Endothelial cell of umbilical vein (primary cell): ENCODE measurements at regions of chr2 and their contacts with region 1.

Region 1: GRCh38 chr2:227406177-227407031 is 18.7 kb upstream of the SCYGR1 start:
- DNase-seq: peak; percentile 96
- H3K4me3 ChIP-seq: no peak overlapping the region
- H3K27ac ChIP-seq: peak overlapping the region; percentile 85
- H3K4me1 ChIP-seq: peaks cover 8% of the 10 kb centered on the region
- H3K27me3 ChIP-seq: no peaks in the 10 kb centered on the region
- CTCF ChIP-seq: peak; percentile 57 to 81
- POLR2A ChIP-seq: peak; percentile 50

Region 2: GRCh38 chr2:226118471-226119430 is 1287.7 kb before region 1 on chr2:
- CTCF ChIA-PET with region 1: no interaction called
- POLR2A ChIA-PET with region 1: no interaction called
- dilution Hi-C with region 1: no loop called
- intact Hi-C with region 1: no loop called
- DNase-seq: no peak
- H3K4me3 ChIP-seq: no peak overlapping the region
- H3K27ac ChIP-seq: no peak overlapping the region
- H3K4me1 ChIP-seq: peaks cover 5% of the 10 kb centered on the region
- H3K27me3 ChIP-seq: no peaks in the 10 kb centered on the region
- CTCF ChIP-seq: no peak
- POLR2A ChIP-seq: no peak

Region 3: DNA sequence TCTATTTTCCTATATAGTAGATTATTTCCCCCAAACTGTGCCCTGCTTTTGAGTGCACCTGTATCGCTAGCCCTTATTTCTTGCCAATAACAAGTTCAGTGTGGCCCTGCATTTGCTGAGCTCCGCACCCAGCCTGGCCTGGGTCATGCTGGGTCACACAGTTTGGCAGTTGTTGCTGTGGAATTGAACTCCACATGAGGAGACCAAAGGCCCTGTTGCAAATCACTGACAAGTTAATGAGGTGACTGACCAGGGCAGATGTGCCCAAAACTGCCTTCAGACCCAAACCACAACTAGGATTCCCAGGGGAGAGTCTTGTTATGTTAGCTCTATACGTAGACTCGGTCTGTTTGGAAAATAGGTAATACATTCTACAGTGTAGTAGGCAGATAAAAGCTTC is 273.4 kb before region 1 on chr2:
- CTCF ChIA-PET with region 1: interaction called, 3 read pairs
- POLR2A ChIA-PET with region 1: no interaction called
- dilution Hi-C with region 1: no loop called
- intact Hi-C with region 1: loop called (anchors 5 kb)
- DNase-seq: no peak
- H3K4me3 ChIP-seq: no peak overlapping the region
- H3K27ac ChIP-seq: no peak overlapping the region
- H3K4me1 ChIP-seq: no peaks in the 10 kb centered on the region
- H3K27me3 ChIP-seq: no peaks in the 10 kb centered on the region
- CTCF ChIP-seq: no peak
- POLR2A ChIP-seq: no peak

Region 4: DNA sequence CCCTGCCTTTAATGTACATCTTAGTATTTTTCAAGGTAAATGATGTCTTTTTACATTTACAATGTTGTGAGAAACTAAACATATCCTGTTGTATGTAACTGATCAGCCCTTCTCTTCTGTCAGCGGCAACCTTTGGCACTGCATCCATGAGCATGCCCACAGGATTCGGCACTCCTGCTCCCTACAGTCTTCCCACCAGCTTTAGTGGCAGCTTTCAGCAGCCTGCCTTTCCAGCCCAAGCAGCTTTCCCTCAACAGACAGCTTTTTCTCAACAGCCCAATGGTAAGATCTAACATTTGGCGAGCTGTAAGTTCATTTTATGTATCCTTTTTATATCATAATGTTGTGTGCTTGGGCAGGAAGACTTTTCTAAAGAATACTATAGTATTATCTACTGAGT is 145.4 kb after region 1 on chr2:
- CTCF ChIA-PET with region 1: interaction called, 5 read pairs
- POLR2A ChIA-PET with region 1: no interaction called
- dilution Hi-C with region 1: no loop called
- intact Hi-C with region 1: loop called (anchors 2 kb)
- DNase-seq: no peak
- H3K4me3 ChIP-seq: no peak overlapping the region
- H3K27ac ChIP-seq: no peak overlapping the region
- H3K4me1 ChIP-seq: no peaks in the 10 kb centered on the region
- H3K27me3 ChIP-seq: no peaks in the 10 kb centered on the region
- CTCF ChIP-seq: no peak
- POLR2A ChIP-seq: no peak

Region 5: GRCh38 chr2:227566012-227566411 is 159.6 kb after region 1 on chr2:
- CTCF ChIA-PET with region 1: no interaction called
- POLR2A ChIA-PET with region 1: no interaction called
- dilution Hi-C with region 1: no loop called
- intact Hi-C with region 1: loop called (anchors 5 kb)
- DNase-seq: no peak
- H3K4me3 ChIP-seq: no peak overlapping the region
- H3K27ac ChIP-seq: no peak overlapping the region
- H3K4me1 ChIP-seq: no peaks in the 10 kb centered on the region
- H3K27me3 ChIP-seq: no peaks in the 10 kb centered on the region
- CTCF ChIP-seq: no peak
- POLR2A ChIP-seq: no peak